Activated CD4-positive, alpha-beta T cell treated with anti-CD3 and anti-CD28 coated beads for 36 hours (primary cell): ENCODE measurements at regions of chr10 and their contacts with region 1.

Region 1: GRCh38 chr10:70820976-70821755 is 5.4 kb downstream of the SGPL1 start:
- DNase-seq: peak; percentile 48
- ATAC-seq: peak; percentile 90
- H3K4me3 Mint-ChIP-seq: peak overlapping the region; percentile 37
- H3K27ac Mint-ChIP-seq: peak overlapping the region; percentile 86
- H3K4me1 Mint-ChIP-seq: peaks cover 64% of the 10 kb centered on the region
- H3K27me3 Mint-ChIP-seq: no peaks in the 10 kb centered on the region

Region 2: GRCh38 chr10:70803775-70804420 is 17.3 kb before region 1 on chr10:
- CTCF ChIA-PET with region 1: no interaction called
- POLR2A ChIA-PET with region 1: no interaction called
- intact Hi-C with region 1: no loop called
- DNase-seq: no peak
- ATAC-seq: no peak
- H3K4me3 Mint-ChIP-seq: no peak overlapping the region
- H3K27ac Mint-ChIP-seq: no peak overlapping the region
- H3K4me1 Mint-ChIP-seq: no peaks in the 10 kb centered on the region
- H3K27me3 Mint-ChIP-seq: peaks cover 16% of the 10 kb centered on the region

Region 3: GRCh38 chr10:70832852-70833528 is 11.8 kb after region 1 on chr10:
- CTCF ChIA-PET with region 1: interaction called, 74 read pairs
- POLR2A ChIA-PET with region 1: interaction called, 12 read pairs
- intact Hi-C with region 1: loop called (anchors 1 kb)
- DNase-seq: no peak
- ATAC-seq: peak; percentile 74
- H3K4me3 Mint-ChIP-seq: peak overlapping the region; percentile 20
- H3K27ac Mint-ChIP-seq: peak overlapping the region; percentile 88
- H3K4me1 Mint-ChIP-seq: peaks cover 89% of the 10 kb centered on the region
- H3K27me3 Mint-ChIP-seq: no peaks in the 10 kb centered on the region

Region 4: DNA sequence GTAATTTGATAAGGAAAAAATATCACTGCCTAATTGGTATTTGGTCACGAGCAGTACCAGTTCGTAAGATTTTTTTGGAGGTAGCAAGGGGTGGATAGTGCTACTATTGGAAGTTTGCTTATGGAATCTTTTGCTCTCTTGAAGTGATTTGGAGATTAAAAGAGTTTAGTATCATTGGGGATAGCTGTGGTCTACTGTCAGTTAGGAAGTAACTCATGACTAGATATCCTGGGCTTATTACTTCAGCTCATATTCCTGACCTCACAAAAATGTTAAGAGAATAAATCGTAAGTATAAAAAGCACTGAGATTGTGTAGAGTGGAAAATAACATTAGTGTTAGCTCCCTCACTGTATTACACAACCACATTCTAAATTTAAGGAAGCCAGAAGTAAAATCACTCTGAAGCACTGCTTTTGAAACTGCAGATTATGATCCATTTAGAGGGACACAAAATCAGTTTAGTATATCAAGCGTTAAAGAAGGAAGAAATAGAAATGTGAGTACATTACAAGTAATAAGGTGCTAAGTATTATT is 17.2 kb after region 1 on chr10:
- CTCF ChIA-PET with region 1: interaction called, 74 read pairs
- POLR2A ChIA-PET with region 1: interaction called, 12 read pairs
- intact Hi-C with region 1: loop called (anchors 1 kb)
- DNase-seq: no peak
- ATAC-seq: no peak
- H3K4me3 Mint-ChIP-seq: no peak overlapping the region
- H3K27ac Mint-ChIP-seq: peak overlapping the region; percentile 65
- H3K4me1 Mint-ChIP-seq: peaks cover 70% of the 10 kb centered on the region
- H3K27me3 Mint-ChIP-seq: no peaks in the 10 kb centered on the region

Region 5: GRCh38 chr10:70847659-70848360 is 26.6 kb after region 1 on chr10:
- CTCF ChIA-PET with region 1: interaction called, 5 read pairs
- POLR2A ChIA-PET with region 1: interaction called, 3 read pairs
- intact Hi-C with region 1: loop called (anchors 1 kb)
- DNase-seq: no peak
- ATAC-seq: peak; percentile 86
- H3K4me3 Mint-ChIP-seq: peak overlapping the region; percentile 23
- H3K27ac Mint-ChIP-seq: peak overlapping the region; percentile 82
- H3K4me1 Mint-ChIP-seq: peaks cover 52% of the 10 kb centered on the region
- H3K27me3 Mint-ChIP-seq: no peaks in the 10 kb centered on the region

Region 6: GRCh38 chr10:71740069-71740468 is 918.9 kb after region 1 on chr10:
- CTCF ChIA-PET with region 1: no interaction called
- POLR2A ChIA-PET with region 1: no interaction called
- intact Hi-C with region 1: loop called in 1 of 2 experiments (anchors 10 kb)
- DNase-seq: no peak
- ATAC-seq: no peak
- H3K4me3 Mint-ChIP-seq: no peak overlapping the region
- H3K27ac Mint-ChIP-seq: peak overlapping the region; percentile 97
- H3K4me1 Mint-ChIP-seq: peaks cover 100% of the 10 kb centered on the region
- H3K27me3 Mint-ChIP-seq: no peaks in the 10 kb centered on the region